Ascending aorta (tissue), 2 donors: ENCODE measurements at regions of chr3 and their contacts with region 1.

Region 1: GRCh38 chr3:99753268-99753975 is 64.2 kb upstream of the CMSS1 start:
- DNase-seq: no peak
- H3K4me3 ChIP-seq: no peak overlapping the region
- H3K27ac ChIP-seq: peak overlapping the region; percentile 65 to 70
- H3K4me1 ChIP-seq: peaks cover 0 to 47% of the 10 kb centered on the region in 2 donors
- H3K27me3 ChIP-seq: no peaks in the 10 kb centered on the region
- CTCF ChIP-seq: peak; percentile 48 to 87 (median 78)

Region 2: GRCh38 chr3:98901392-98902350 is 851.8 kb before region 1 on chr3 and contains the start of gene DCBLD2:
- intact Hi-C with region 1: loop called (anchors 10 kb)
- DNase-seq: peak; percentile 93 to 99
- H3K4me3 ChIP-seq: peak within 1 kb of the TSS; percentile 90 to 94
- H3K27ac ChIP-seq: peak within 1 kb of the TSS; percentile 89 to 95
- H3K4me1 ChIP-seq: no peaks in the 10 kb centered on the region
- H3K27me3 ChIP-seq: no peaks in the 10 kb centered on the region
- CTCF ChIP-seq: no peak
- total RNA-seq, gene DCBLD2: 16.3 TPM

Region 3: DNA sequence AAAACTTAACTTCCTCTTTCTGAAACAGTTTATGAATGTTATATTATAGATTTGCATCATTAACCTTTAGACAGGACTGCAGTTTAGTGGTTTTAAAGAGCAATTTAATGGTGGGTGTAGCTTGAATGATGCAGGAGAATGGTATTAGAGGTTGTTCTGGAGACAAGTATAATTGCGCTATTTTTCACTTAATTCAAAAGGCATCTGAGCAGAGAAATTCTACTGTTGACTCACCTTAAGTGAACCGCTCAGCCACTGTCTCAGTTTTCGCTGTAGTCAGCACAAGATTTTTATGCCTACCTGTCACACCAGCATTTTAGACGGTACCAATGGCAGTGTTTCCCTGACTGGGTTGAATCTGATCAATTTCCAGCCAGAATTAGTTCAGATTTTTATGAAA is 503.1 kb before region 1 on chr3:
- intact Hi-C with region 1: loop called (anchors 5 kb)
- DNase-seq: no peak
- H3K4me3 ChIP-seq: no peak overlapping the region
- H3K27ac ChIP-seq: peak overlapping the region; percentile 74 to 78
- H3K4me1 ChIP-seq: peaks cover 2 to 54% of the 10 kb centered on the region in 2 donors
- H3K27me3 ChIP-seq: no peaks in the 10 kb centered on the region
- CTCF ChIP-seq: no peak

Region 4: DNA sequence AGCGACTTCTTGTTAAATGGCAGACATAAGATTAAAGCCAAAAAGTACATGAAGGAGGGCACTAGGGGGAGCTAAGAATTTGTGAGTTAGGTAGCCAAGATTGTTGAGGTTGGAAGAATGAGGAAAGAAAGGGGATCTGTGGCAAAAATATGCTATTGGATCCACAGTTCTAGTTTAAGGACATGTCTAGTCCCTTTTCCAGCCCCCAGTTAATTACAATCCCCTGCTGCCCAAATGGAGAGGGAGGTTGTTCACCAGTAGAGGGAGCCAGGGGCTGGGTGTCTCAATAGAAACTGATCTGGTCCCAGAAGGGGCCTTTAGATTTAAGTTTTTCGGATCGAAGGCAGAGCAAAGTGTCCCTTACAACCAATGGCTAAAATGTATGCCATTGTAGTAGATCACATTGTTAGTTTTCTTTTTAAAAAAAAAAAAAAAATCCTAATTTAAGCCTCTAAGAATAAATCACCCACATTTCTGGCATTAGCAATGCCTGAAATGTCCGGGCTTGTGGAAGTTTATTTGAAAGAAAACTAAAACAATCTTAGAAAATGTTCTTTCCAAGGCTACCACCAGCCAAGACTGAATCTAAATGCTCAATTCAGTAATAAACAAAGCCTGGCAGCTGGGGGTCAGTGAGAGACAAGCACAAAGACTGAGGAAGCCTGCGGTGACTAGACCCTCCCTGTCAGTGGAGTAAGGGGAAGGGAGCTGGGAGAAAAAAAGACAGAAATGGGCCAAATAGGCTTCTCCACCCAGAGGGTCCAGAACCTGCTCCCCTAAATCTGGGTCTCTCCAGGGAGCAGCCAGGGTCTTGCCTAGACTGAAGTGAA is 107.9 kb before region 1 on chr3:
- intact Hi-C with region 1: loop called (anchors 5 kb)
- DNase-seq: no peak
- H3K4me3 ChIP-seq: peak overlapping the region; percentile 4 to 23
- H3K27ac ChIP-seq: peak overlapping the region; percentile 76 to 95
- H3K4me1 ChIP-seq: peaks cover 0 to 18% of the 10 kb centered on the region in 2 donors
- H3K27me3 ChIP-seq: no peaks in the 10 kb centered on the region
- CTCF ChIP-seq: peak; percentile 51 to 61 (median 55)

Region 5: GRCh38 chr3:99708207-99708745 is 45.1 kb before region 1 on chr3:
- intact Hi-C with region 1: loop called (anchors 5 kb)
- DNase-seq: no peak
- H3K4me3 ChIP-seq: no peak overlapping the region
- H3K27ac ChIP-seq: peak overlapping the region; percentile 60 to 63
- H3K4me1 ChIP-seq: peaks cover 3 to 42% of the 10 kb centered on the region in 2 donors
- H3K27me3 ChIP-seq: no peaks in the 10 kb centered on the region
- CTCF ChIP-seq: no peak